Spleen (tissue), 13 donors: ENCODE measurements at regions of chr2 and their contacts with region 1.

Region 1: DNA sequence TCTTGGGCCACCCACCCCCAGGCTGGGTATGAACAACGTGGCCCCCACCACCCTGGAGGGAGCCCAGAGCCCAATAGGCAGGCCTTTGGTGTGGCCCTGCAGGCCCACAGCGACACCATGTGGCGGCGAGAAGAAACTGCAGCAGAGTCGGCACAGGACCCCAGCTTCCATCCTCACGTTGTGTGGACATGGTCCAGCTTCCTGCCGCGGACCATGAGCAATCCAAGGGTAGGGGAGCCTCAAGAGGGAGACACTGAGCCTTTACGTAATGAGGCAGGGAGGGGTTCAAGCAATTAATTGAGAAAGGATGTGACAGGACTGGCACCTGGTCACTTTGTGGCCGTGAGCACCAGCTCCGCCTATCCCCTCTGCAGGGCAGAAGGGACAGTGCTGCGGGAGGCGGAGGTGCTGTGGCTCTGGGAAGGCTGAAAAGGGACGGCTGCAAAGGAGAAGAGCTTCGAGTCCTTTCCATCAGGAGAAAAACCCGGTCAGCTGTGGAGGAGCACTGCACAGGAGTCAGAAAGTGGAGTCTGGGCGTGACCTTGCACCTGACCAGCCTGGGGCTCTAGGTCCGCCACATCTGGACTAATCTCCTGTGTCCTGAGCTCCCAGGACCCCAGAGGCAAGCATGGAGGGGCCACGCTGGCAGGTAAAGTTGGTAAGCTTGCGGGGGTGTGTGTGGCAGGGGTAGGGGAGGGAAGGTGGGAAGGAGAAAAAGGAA is 44.8 kb downstream of the TMEM37 start:
- DNase-seq: peak; percentile 87
- H3K4me3 ChIP-seq: no peak overlapping the region
- H3K27ac ChIP-seq: no peak overlapping the region
- H3K4me1 ChIP-seq: peaks cover 0 to 5% (median 0%) of the 10 kb centered on the region in 6 donors
- H3K27me3 ChIP-seq: peaks cover 0 to 25% (median 0%) of the 10 kb centered on the region in 7 donors
- CTCF ChIP-seq: peak; percentile 65 to 92 (median 84)
- POLR2A ChIP-seq: no peak

Region 2: DNA sequence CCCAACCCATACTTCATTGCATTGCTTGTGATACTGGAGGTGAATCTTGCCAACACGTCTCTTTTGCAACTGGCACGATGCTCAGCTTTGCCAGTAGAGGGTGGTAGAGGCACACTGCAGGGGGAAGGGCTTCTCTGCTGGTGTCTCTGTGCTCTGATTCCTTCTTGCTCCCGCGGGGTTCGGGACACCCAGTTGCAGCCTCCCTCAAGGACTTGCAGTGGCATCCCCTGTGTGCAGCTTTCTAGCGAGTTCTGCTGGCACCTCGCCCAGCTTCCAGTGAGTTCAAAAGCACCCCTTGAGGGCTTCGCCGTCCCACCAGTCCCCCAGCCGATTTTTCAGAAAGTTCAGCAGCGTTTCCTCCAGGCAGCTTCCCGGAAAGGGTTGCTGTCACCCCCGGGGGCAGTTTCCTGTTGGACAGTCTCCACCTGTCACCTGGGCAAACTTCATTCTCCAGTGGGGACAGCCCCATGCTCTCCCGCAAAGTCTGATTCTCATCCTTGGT is 593.7 kb before region 1 on chr2:
- intact Hi-C with region 1: loop called (anchors 5 kb)
- DNase-seq: peak; percentile 85
- H3K4me3 ChIP-seq: peak overlapping the region in 6 of 8 donors; percentile 1 to 65 (median 22)
- H3K27ac ChIP-seq: no peak overlapping the region
- H3K4me1 ChIP-seq: peaks cover 0 to 15% (median 5%) of the 10 kb centered on the region in 6 donors
- H3K27me3 ChIP-seq: peaks cover 0 to 50% (median 7%) of the 10 kb centered on the region in 7 donors
- CTCF ChIP-seq: peak; percentile 69 to 89 (median 84)
- POLR2A ChIP-seq: no peak

Region 3: GRCh38 chr2:119407430-119408220 is 68.8 kb before region 1 on chr2:
- intact Hi-C with region 1: loop called (anchors 2 kb)
- DNase-seq: no peak
- H3K4me3 ChIP-seq: no peak overlapping the region
- H3K27ac ChIP-seq: peak overlapping the region in 1 of 8 donors; percentile 2
- H3K4me1 ChIP-seq: peaks cover 0 to 4% (median 0%) of the 10 kb centered on the region in 6 donors
- H3K27me3 ChIP-seq: no peaks in the 10 kb centered on the region
- CTCF ChIP-seq: peak; percentile 42 to 86 (median 67)
- POLR2A ChIP-seq: no peak

Region 4: DNA sequence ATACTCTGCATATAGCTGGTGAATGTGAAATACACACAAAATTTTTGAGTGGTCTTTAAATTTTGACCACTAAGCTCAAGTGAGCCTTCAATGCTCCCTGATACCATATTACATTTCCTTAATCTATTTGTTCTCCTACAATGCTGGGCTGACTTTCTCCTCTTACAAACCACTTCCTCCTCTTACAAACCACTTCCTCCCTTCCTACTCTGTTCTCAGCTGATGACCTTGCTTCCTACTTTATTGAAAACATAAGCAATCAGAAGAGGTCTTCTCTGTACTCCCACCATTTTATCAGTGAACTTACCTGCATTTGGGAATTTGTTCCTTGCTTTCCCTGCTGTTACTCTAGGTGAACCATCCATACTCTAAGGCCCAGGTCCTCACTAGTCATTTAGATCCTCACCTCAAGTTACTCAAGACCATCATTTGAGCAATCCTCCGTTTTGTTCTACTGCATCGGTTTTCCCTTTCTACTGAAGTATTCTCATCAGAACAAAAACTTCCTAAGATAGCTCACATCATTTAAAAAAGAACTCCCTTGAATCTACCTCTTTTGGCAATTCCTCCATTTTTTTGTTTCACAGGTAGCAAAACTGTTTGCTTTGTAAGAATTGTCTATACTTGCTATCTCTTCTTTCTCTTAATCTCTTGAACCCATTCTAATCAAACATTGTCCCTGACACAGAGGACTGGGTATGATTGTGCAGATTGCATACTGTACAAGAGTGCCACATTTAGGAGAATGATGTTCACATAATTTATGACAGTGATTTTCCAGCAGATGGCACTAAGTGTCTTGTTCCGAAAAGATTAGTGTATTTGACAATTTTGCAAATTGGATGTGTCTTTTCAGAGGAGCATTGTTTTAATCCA is 633.0 kb after region 1 on chr2:
- intact Hi-C with region 1: no loop called
- DNase-seq: no peak
- H3K4me3 ChIP-seq: peak overlapping the region in 1 of 8 donors; percentile 39
- H3K27ac ChIP-seq: peak overlapping the region in 7 of 8 donors; percentile 35 to 83 (median 66)
- H3K4me1 ChIP-seq: peaks cover 13 to 37% (median 24%) of the 10 kb centered on the region in 6 donors
- H3K27me3 ChIP-seq: no peaks in the 10 kb centered on the region
- CTCF ChIP-seq: peak in 9 of 11 experiments; percentile 19 to 60 (median 42)
- POLR2A ChIP-seq: no peak